OCI-LY7 (cell line): ENCODE measurements at regions of chr20 and their contacts with region 1.

Region 1: GRCh38 chr20:35726759-35727711 is 15.0 kb downstream of the RBM39 start:
- DNase-seq: no peak
- H3K4me3 ChIP-seq: no peak overlapping the region
- H3K27ac ChIP-seq: no peak overlapping the region
- H3K4me1 ChIP-seq: no peaks in the 10 kb centered on the region
- CTCF ChIP-seq: no peak

Region 2: DNA sequence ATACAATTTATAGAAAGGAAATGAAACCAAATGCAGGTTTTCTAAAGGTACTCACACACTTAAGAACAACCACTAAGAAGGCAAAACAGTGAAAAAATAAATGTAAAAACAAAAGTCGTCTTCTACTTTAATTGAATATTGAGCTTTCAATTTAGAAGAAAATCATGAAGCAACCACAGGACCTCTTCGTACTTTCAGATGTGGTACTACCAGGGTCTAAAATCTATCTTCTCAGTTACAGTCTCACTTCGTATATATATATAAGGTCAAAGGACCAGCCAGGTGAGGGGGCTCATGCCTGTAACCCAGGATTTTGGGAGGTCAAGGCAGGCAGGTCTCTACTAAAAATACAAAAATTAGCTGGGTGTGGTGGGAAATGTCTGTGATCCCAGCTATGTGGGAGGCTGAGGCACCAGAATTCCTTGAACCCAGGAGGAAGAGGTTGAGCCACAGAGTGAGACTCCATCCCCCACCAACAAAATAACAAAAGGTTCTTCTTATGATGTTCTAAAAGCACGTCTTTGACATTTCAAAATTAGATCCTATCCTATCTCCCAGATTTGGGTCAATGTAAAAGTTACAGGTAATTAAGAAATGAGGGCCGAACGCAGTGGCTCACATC is 15.3 kb before region 1 on chr20:
- CTCF ChIA-PET with region 1: no interaction called
- POLR2A ChIA-PET with region 1: interaction called, 5 read pairs
- intact Hi-C with region 1: loop called (anchors 2 kb)
- DNase-seq: no peak
- H3K4me3 ChIP-seq: no peak overlapping the region
- H3K27ac ChIP-seq: no peak overlapping the region
- H3K4me1 ChIP-seq: no peaks in the 10 kb centered on the region
- CTCF ChIP-seq: no peak

Region 3: GRCh38 chr20:35791821-35792220 is 64.8 kb after region 1 on chr20:
- CTCF ChIA-PET with region 1: no interaction called
- POLR2A ChIA-PET with region 1: no interaction called
- intact Hi-C with region 1: no loop called
- DNase-seq: no peak
- H3K4me3 ChIP-seq: no peak overlapping the region
- H3K27ac ChIP-seq: no peak overlapping the region
- H3K4me1 ChIP-seq: peaks cover 7% of the 10 kb centered on the region
- CTCF ChIP-seq: no peak

Region 4: GRCh38 chr20:35816339-35816738 is 89.3 kb after region 1 on chr20:
- CTCF ChIA-PET with region 1: no interaction called
- POLR2A ChIA-PET with region 1: no interaction called
- intact Hi-C with region 1: no loop called
- DNase-seq: no peak
- H3K4me3 ChIP-seq: no peak overlapping the region
- H3K27ac ChIP-seq: no peak overlapping the region
- H3K4me1 ChIP-seq: no peaks in the 10 kb centered on the region
- CTCF ChIP-seq: no peak

Region 5: GRCh38 chr20:35883778-35884540 is 156.9 kb after region 1 on chr20:
- CTCF ChIA-PET with region 1: no interaction called
- POLR2A ChIA-PET with region 1: no interaction called
- intact Hi-C with region 1: no loop called
- DNase-seq: peak; percentile 72
- H3K4me3 ChIP-seq: no peak overlapping the region
- H3K27ac ChIP-seq: no peak overlapping the region
- H3K4me1 ChIP-seq: no peaks in the 10 kb centered on the region
- CTCF ChIP-seq: peak; percentile 86